ENCODE measurements at regions of chr11 and their contacts with region 1.

Region 1: GRCh38 chr11:125170510-125171031 is 6.0 kb downstream of the PKNOX2 start:
- DNase-seq: peak; percentile 84
- H3K4me3 ChIP-seq: 0 out of 2 replicates have a peak overlapping the region, but pooled peaks have one; percentile 27
- H3K27ac ChIP-seq: peak overlapping the region; percentile 93
- H3K27me3 ChIP-seq: peaks cover 21% of the 10 kb centered on the region
- CTCF ChIP-seq: no peak

Region 2: GRCh38 chr11:125263268-125263790 is 92.8 kb after region 1 on chr11:
- CTCF ChIA-PET with region 1: interaction called, 3 read pairs
- POLR2A ChIA-PET with region 1: interaction called, 11 read pairs
- DNase-seq: peak; percentile 100
- H3K4me3 ChIP-seq: no peak overlapping the region
- H3K27ac ChIP-seq: peak overlapping the region; percentile 99
- H3K27me3 ChIP-seq: no peaks in the 10 kb centered on the region
- CTCF ChIP-seq: no peak